Activated CD4-positive, alpha-beta memory T cell treated with anti-CD3 and anti-CD28 coated beads, Interleukin-2, amount 10 ng/mL, durations not matched to agents 7 days and 5 days (primary cell): ENCODE measurements at regions of chr4 and their contacts with region 1.

Region 1: GRCh38 chr4:6909073-6909965 is at the start of gene TBC1D14:
- DNase-seq: peak; percentile 88
- H3K4me3 Mint-ChIP-seq: peak within 1 kb of the TSS; percentile 91
- H3K27ac Mint-ChIP-seq: peak within 1 kb of the TSS; percentile 85
- H3K4me1 Mint-ChIP-seq: peaks cover 64% of the 10 kb centered on the region
- H3K27me3 Mint-ChIP-seq: peaks cover 2% of the 10 kb centered on the region
- total RNA-seq, gene TBC1D14: 53.7 to 55.3 TPM

Region 2: DNA sequence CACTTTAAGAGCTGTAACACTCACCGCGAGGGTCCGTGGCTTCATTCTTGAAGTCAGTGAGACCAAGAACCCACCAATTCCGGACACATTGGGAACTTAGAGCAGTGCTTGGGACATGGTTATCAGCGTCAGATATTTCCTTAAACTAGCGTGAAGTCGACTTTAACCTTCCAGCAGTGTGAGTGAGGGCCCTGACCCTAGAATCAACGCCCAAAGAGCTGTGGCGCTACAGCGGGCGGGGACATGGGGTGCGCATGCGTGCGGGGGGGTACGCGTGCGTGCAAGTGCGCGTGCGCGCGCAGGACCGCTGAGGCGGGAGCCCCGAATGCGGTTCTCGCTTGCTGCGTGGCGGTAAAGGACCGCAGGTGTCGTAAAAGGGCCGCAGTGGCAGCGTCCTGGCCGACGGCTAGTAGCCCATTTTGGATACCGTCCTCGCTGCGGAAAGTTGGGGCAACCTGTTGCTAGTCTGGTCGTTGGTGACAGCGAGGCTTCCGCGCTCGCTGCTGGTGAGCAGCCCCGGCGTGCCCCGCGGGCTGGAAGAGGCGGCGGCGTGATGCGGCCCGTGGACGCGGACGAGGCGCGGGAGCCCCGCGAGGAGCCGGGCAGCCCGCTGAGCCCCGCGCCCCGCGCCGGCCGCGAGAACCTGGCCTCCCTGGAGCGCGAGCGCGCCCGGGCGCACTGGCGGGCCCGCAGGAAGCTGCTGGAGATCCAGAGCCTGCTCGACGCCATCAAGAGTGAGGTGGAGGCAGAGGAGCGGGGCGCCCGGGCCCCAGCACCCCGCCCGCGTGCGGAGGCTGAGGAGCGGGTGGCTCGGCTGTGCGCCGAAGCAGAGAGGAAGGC is 235.4 kb before region 1 on chr4:
- CTCF ChIA-PET with region 1: no interaction called
- POLR2A ChIA-PET with region 1: interaction called, 18 read pairs
- DNase-seq: peak; percentile 95
- H3K4me3 Mint-ChIP-seq: peak overlapping the region; percentile 97
- H3K27ac Mint-ChIP-seq: peak overlapping the region; percentile 96
- H3K4me1 Mint-ChIP-seq: peaks cover 48% of the 10 kb centered on the region
- H3K27me3 Mint-ChIP-seq: no peaks in the 10 kb centered on the region

Region 3: DNA sequence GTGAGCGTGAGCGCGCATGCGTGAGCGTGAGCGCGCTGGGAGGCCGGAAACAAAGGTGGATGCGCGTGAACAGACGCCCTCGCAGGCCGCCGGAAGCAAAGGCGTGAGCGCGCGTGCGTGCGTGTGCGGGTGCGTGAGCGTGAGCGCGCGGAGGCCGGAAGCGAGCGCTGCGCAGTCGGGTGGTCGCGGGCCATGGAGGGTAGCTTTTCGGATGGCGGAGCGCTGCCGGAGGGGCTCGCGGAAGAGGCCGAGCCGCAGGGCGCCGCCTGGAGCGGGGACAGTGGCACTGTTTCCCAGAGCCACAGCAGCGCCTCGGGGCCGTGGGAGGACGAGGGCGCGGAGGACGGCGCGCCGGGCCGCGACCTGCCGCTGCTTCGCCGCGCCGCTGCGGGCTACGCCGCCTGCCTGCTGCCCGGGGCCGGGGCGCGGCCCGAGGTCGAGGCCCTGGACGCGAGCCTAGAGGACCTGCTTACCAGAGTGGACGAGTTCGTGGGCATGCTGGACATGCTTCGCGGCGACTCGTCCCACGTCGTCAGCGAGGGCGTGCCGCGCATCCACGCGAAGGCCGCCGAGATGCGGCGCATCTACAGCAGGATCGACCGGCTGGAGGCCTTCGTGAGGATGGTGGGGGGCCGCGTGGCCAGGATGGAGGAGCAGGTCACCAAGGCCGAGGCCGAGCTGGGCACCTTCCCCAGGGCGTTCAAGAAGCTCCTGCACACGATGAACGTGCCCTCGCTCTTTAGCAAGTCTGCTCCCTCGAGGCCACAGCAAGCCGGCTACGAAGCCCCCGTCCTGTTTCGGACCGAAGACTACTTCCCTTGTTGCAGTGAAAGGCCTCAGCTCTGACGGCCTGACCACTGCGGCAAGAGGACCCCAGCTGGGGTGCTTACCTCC is 193.1 kb before region 1 on chr4 and contains the start of gene BLOC1S4:
- CTCF ChIA-PET with region 1: interaction called, 3 read pairs
- POLR2A ChIA-PET with region 1: interaction called, 12 read pairs
- DNase-seq: peak; percentile 91
- H3K4me3 Mint-ChIP-seq: peak within 1 kb of the TSS; percentile 88
- H3K27ac Mint-ChIP-seq: peak within 1 kb of the TSS; percentile 87
- H3K4me1 Mint-ChIP-seq: peaks cover 36% of the 10 kb centered on the region
- H3K27me3 Mint-ChIP-seq: no peaks in the 10 kb centered on the region
- total RNA-seq, gene BLOC1S4: 22.9 to 23.2 TPM

Region 4: GRCh38 chr4:6768539-6768905 is 140.8 kb before region 1 on chr4:
- CTCF ChIA-PET with region 1: no interaction called
- POLR2A ChIA-PET with region 1: no interaction called
- DNase-seq: no peak
- H3K4me3 Mint-ChIP-seq: no peak overlapping the region
- H3K27ac Mint-ChIP-seq: no peak overlapping the region
- H3K4me1 Mint-ChIP-seq: peaks cover 12% of the 10 kb centered on the region
- H3K27me3 Mint-ChIP-seq: peaks cover 17% of the 10 kb centered on the region

Region 5: DNA sequence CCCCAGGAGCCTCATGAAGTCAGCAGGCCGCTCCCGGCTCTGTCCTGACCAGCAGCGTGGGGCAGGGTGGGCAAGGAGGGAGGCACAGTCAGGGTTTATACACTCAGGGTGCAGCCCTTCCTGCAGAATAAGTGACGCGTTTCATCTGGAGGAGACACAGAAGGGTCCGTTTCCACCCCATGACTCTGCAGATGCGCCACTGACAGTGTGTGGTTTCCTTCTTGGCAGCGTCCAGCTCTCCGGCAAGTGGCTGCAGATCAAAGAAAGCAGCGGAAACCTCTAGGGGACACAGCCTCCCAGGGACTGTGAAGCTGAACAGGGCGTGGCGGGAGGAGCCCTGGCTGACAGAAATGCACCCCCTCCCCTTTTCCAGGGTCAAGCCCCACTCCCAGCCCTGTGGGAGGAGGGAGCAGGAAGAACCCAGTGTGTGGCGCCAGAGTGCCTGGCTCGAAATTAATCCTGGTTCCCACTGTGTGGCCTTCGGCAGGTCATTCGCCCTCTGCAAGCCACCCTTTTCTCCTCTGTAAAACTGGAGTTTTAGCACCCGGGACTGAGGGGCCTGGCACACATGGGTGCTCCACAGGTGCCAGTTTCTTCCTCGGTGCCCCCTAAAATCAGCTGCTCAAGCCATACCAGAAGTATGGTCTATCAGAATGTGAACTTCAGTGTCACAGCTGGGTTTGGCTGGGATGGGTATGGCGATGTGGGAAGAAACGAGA is 17.0 kb before region 1 on chr4:
- CTCF ChIA-PET with region 1: interaction called, 15 read pairs
- POLR2A ChIA-PET with region 1: interaction called, 109 read pairs
- DNase-seq: peak; percentile 66
- H3K4me3 Mint-ChIP-seq: peak overlapping the region; percentile 48
- H3K27ac Mint-ChIP-seq: peak overlapping the region; percentile 94
- H3K4me1 Mint-ChIP-seq: peaks cover 49% of the 10 kb centered on the region
- H3K27me3 Mint-ChIP-seq: no peaks in the 10 kb centered on the region

Region 6: DNA sequence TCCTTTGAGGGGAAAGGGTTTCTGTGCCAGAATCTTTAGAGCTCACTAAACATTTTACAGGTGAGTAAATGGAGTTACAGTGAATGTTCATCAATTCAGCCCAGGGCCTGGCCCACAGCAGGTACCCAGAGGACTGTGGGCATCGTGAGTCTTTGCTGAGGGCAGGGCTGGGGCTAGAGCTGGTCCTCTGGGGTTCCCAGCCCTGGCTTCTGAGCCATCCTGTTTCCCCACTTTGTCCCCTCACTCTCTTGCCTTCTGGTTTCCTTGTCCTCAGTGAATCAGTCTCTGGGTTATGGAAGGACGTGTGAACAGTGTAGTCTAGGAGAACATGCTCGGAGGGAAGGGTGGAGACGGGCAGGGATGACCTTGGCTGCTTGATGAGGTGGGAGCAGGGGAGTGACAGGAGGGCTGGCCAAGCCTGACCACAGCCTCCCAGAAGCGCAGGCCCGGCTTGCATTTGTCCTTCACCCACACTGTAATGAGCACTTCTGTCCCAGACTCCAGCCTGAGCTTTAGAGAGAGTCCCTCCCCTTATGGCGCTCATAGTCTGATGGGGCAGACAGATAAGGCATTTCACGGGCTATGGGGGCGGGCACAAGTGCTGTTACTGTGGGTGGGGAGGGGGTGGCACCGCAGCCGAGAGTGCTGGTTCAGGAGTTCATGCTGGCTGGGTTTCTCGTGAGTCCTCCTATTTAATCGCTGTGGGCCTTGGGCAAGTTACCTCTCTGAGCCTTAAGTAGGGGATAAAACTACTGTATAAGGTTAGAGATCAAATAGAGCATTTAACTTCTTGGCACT is 17.6 kb after region 1 on chr4:
- CTCF ChIA-PET with region 1: interaction called, 10 read pairs
- POLR2A ChIA-PET with region 1: interaction called, 79 read pairs
- DNase-seq: peak; percentile 76
- H3K4me3 Mint-ChIP-seq: peak overlapping the region; percentile 53
- H3K27ac Mint-ChIP-seq: peak overlapping the region; percentile 70
- H3K4me1 Mint-ChIP-seq: peaks cover 62% of the 10 kb centered on the region
- H3K27me3 Mint-ChIP-seq: no peaks in the 10 kb centered on the region

Region 7: DNA sequence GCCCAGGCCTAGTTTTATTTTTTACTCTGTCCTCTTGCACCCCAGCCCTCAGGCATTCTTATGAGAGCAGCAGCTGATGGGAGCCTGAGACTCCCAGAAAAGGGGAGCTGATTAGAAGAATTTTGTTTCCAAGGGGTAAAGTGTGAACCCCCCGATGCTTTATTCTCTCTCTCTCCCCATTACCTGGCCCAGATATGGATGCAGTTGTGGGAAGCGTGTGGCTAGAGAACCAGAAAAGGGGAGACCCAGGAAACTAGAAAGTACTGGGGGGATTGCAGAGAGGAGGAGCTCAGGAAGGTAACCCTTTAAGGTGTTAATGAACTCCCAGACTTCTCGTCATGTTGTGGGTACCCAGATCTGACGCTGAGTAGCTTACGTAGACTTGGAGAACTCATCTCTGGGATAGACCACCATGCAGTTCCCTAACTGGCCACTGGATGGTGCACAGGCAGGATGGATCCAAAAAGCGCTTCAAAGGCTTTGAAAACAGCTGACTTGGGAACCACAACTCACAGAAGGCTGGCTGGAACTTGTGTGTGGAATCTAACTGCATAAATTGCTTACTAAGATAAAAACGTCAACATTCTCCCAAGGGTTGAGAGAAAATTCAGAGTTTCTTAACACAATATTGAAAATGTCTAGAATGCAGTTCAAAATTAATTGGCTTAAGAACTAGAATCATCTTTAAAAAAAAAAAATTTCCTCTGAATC is 65.0 kb after region 1 on chr4:
- CTCF ChIA-PET with region 1: interaction called, 11 read pairs
- POLR2A ChIA-PET with region 1: interaction called, 4 read pairs
- DNase-seq: peak; percentile 83
- H3K4me3 Mint-ChIP-seq: no peak overlapping the region
- H3K27ac Mint-ChIP-seq: no peak overlapping the region
- H3K4me1 Mint-ChIP-seq: peaks cover 19% of the 10 kb centered on the region
- H3K27me3 Mint-ChIP-seq: no peaks in the 10 kb centered on the region

Region 8: DNA sequence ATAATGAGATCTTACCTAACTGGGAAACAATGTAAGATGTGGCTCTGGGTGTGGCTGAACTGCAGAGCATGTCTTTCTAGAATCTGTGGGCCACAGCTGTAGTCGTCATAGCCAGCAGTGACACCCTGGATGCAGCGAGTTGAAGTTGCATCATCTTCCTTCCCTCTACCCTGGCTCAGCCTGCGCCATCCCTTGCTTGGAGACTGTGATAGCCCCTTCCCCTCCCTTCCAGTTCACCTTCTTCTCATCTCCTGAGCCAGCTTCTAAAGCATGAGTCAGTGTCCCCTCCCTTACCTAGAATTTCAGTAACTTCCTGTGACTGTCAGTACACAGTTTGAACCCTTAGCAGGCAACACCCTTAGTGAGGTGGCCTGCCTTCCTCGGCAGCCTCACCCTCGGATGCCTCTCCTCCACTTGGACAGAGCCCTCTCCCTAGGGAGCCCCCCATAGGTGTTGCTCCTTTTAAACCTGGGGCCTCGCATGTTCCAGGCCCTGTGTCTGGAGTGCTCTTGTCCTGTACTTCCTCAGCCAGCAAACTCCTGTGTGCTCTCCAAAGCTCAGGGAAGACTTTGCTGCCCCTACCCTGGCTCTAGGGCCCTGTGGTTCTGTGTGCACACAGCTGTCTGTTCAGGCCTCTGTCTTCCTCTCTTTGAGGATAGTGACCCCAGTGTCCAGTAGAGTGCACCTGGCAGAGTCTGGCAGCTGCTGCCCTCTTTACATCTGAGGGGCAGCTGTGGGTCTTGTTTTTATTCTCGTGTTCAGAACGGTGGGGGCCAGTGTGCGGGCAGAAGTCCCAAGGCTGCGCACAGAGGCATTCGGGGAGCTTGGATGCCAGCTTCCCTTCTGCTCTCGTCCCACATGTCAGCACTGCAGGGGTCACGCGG is 90.1 kb after region 1 on chr4:
- CTCF ChIA-PET with region 1: interaction called, 4 read pairs
- POLR2A ChIA-PET with region 1: interaction called, 19 read pairs
- DNase-seq: peak; percentile 79
- H3K4me3 Mint-ChIP-seq: peak overlapping the region; percentile 41
- H3K27ac Mint-ChIP-seq: peak overlapping the region; percentile 95
- H3K4me1 Mint-ChIP-seq: peaks cover 44% of the 10 kb centered on the region
- H3K27me3 Mint-ChIP-seq: no peaks in the 10 kb centered on the region

Region 9: GRCh38 chr4:7295911-7296660 is 386.8 kb after region 1 on chr4:
- CTCF ChIA-PET with region 1: no interaction called
- POLR2A ChIA-PET with region 1: no interaction called
- DNase-seq: no peak
- H3K4me3 Mint-ChIP-seq: no peak overlapping the region
- H3K27ac Mint-ChIP-seq: no peak overlapping the region
- H3K4me1 Mint-ChIP-seq: no peaks in the 10 kb centered on the region
- H3K27me3 Mint-ChIP-seq: peaks cover 2% of the 10 kb centered on the region